ENCODE measurements at regions of chrX and their contacts with region 1.

Region 1: DNA sequence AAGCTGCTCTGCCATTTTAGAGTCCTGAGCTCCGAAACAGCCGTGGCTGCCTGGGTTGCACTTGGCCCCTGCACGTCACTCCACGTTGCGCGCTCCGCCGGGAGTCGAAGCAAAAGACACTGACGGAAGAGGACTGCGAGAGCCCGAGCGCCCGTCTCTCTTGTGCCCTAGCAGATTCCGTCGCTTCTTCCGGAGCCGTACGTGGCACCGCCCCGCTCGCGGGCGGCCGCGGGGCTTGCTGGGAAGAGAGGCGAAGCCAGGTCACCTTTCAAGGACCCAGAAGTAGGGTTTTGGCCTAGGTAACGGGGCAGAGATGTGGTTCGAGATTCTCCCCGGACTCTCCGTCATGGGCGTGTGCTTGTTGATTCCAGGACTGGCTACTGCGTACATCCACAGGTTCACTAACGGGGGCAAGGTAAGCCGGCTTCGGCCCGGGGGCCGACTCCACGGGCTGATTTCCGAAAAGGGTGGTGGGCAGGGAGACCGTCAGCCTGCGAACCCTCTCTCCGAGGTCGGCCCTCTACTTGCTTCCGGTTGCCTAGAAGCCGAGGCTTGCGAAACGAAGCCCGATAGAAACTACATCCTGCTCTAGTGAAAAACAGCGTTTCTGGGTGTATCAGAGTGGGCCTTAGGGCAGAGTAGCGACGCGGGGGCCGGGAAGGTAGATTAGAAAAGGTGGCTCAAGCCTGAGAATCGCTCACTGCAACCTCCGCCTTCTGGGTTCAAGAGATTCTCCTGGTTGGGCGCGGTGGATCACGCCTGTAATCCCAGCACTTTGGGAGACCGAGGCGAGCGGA is at the starts of genes NDUFA1 and RNF113A:
- DNase-seq: peak; percentile 65 to 90 (median 88)
- ATAC-seq: peak; percentile 95
- H3K4me3 ChIP-seq: peak within 1 kb of the TSS; percentile 90
- H3K4me3 Mint-ChIP-seq: peak within 1 kb of the TSS; percentile 86 to 100 (median 97)
- H3K27ac ChIP-seq: peak within 1 kb of the TSS; percentile 88
- H3K27ac Mint-ChIP-seq: peak within 1 kb of the TSS; percentile 94 to 100 (median 99)
- H3K4me1 ChIP-seq: peaks cover 7 to 8% of the 10 kb centered on the region in 2 donors
- H3K4me1 Mint-ChIP-seq: peaks cover 6 to 35% (median 15%) of the 10 kb centered on the region in 7 donors
- H3K27me3 ChIP-seq: no peaks in the 10 kb centered on the region
- H3K27me3 Mint-ChIP-seq: no peaks in the 10 kb centered on the region
- total RNA-seq, gene NDUFA1: 41.6 to 94.7 (median 46.8) TPM
- total RNA-seq, gene RNF113A: 25.5 to 40.6 (median 34.7) TPM

Region 2: GRCh38 chrX:118345401-118346257 is 1526.2 kb before region 1 on chrX and contains the start of gene WDR44:
- CTCF ChIA-PET with region 1: no interaction called
- POLR2A ChIA-PET with region 1: no interaction called
- intact Hi-C with region 1: loop called in 1 of 2 experiments (anchors 5 kb)
- DNase-seq: peak; percentile 79 to 95 (median 92)
- ATAC-seq: peak; percentile 95
- H3K4me3 ChIP-seq: peak within 1 kb of the TSS; percentile 87
- H3K4me3 Mint-ChIP-seq: peak within 1 kb of the TSS; percentile 87 to 99 (median 98)
- H3K27ac ChIP-seq: peak within 1 kb of the TSS; percentile 93
- H3K27ac Mint-ChIP-seq: peak within 1 kb of the TSS; percentile 92 to 99 (median 96)
- H3K4me1 ChIP-seq: peaks cover 19 to 24% of the 10 kb centered on the region in 2 donors
- H3K4me1 Mint-ChIP-seq: peaks cover 5 to 40% (median 36%) of the 10 kb centered on the region in 7 donors
- H3K27me3 ChIP-seq: no peaks in the 10 kb centered on the region
- H3K27me3 Mint-ChIP-seq: no peaks in the 10 kb centered on the region
- total RNA-seq, gene WDR44: 12.0 to 19.0 (median 17.0) TPM

Region 3: GRCh38 chrX:119574394-119575266 is 297.2 kb before region 1 on chrX and contains the start of gene UBE2A:
- CTCF ChIA-PET with region 1: no interaction called
- POLR2A ChIA-PET with region 1: interaction called, 3 read pairs
- intact Hi-C with region 1: loop called (anchors 5 kb)
- DNase-seq: peak; percentile 72 to 89 (median 85)
- ATAC-seq: peak; percentile 99
- H3K4me3 ChIP-seq: peak within 1 kb of the TSS; percentile 72
- H3K4me3 Mint-ChIP-seq: peak within 1 kb of the TSS; percentile 85 to 96 (median 92)
- H3K27ac ChIP-seq: peak within 1 kb of the TSS; percentile 88
- H3K27ac Mint-ChIP-seq: peak within 1 kb of the TSS; percentile 85 to 97 (median 90)
- H3K4me1 ChIP-seq: peaks cover 0 to 11% of the 10 kb centered on the region in 2 donors
- H3K4me1 Mint-ChIP-seq: peaks cover 7 to 35% (median 18%) of the 10 kb centered on the region in 7 donors
- H3K27me3 ChIP-seq: no peaks in the 10 kb centered on the region
- H3K27me3 Mint-ChIP-seq: no peaks in the 10 kb centered on the region
- total RNA-seq, gene UBE2A: 34.0 to 74.7 (median 60.2) TPM

Region 4: DNA sequence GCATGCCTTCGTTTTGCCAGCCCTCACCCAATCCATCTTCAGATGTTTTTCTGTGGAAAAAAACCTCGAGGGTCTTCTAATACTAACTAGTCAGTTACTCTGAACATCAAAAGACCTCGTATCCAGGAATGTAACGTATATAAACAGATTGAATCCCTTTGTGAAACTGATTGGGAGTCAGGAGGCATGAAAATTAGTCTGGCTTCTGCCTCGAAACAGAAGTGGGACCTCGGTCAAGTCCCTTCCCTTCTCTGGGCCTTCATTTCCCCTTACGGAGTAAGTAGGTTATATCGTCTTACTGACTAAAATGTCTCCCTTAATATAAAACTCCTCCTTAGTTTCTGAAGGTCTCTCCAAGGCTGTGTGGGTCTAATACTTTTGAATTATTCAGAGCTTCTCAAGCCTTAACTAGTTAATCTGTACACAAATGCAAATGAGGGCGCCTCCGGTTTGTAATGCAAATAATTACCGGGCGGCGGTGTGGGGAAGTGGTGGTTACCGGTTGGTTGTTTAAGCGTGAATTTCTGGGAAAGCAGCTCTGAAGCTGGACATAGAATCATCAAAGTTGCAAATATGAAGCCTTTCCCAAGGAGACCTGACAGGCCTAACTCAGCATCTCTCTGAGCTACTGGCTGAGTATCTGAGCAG is 254.2 kb before region 1 on chrX:
- CTCF ChIA-PET with region 1: no interaction called
- POLR2A ChIA-PET with region 1: no interaction called
- intact Hi-C with region 1: no loop called
- DNase-seq: no peak
- ATAC-seq: peak; percentile 27
- H3K4me3 ChIP-seq: no peak overlapping the region
- H3K4me3 Mint-ChIP-seq: no peak overlapping the region
- H3K27ac ChIP-seq: no peak overlapping the region
- H3K27ac Mint-ChIP-seq: peak overlapping the region in 4 of 9 donors; percentile 21 to 67 (median 50)
- H3K4me1 ChIP-seq: no peaks in the 10 kb centered on the region
- H3K4me1 Mint-ChIP-seq: peaks cover 0 to 14% (median 5%) of the 10 kb centered on the region in 7 donors
- H3K27me3 ChIP-seq: no peaks in the 10 kb centered on the region
- H3K27me3 Mint-ChIP-seq: no peaks in the 10 kb centered on the region

Region 5: DNA sequence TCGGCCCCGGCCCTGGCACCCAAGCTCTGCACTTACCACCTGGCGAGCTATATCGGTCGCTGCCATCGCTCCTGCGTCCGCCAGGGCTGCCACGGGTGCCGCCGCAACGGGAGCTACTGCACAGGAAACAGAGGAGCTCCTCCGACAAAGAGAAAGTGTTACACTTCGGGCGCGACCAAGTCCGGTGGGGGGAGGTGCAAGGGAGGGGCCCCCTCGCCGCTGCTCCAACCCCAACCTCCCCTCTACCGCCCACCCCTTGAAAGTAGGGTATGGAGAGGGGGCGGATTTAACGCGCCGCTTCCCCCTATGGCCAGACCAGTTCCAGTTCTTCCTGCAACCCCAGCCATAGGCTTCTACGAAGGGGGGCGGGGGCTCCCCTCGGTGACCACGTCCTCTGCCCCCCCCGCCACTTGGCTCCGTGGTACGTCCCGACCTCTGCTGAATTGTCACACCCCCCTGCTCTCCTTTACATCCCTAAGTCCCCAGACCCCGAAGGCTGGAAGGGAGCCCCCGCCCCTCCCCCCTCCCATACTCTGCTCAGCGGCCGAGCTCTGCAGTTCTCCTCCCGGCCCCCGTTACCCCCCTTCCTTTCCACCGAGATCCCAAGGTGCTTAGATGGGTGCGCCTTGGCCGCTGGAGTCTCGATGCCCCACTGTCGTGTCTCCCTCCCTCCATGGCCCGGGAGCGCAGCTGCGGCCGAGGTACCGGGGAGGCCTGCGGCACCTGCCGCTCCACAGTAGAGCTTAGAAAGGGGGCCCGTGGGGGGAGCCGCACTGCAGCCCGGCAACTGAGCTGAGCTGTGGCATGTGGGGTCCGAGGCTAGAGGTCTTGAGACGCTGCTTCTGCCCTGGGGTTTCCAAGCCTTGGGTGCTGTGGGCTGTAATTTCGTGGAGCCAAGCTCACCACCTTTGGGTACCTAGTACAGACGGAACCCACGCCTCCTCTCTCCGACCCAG is 178.5 kb before region 1 on chrX and contains the start of gene SEPTIN6:
- CTCF ChIA-PET with region 1: no interaction called
- POLR2A ChIA-PET with region 1: interaction called, 3 read pairs
- intact Hi-C with region 1: loop called (anchors 2 to 5 kb)
- DNase-seq: peak; percentile 69 to 93 (median 88)
- ATAC-seq: peak; percentile 83
- H3K4me3 ChIP-seq: peak within 1 kb of the TSS; percentile 77
- H3K4me3 Mint-ChIP-seq: peak within 1 kb of the TSS; percentile 96 to 100 (median 99)
- H3K27ac ChIP-seq: peak within 1 kb of the TSS; percentile 89
- H3K27ac Mint-ChIP-seq: peak within 1 kb of the TSS; percentile 95 to 99 (median 98)
- H3K4me1 ChIP-seq: peaks cover 0 to 7% of the 10 kb centered on the region in 2 donors
- H3K4me1 Mint-ChIP-seq: peaks cover 7 to 41% (median 13%) of the 10 kb centered on the region in 7 donors
- H3K27me3 ChIP-seq: no peaks in the 10 kb centered on the region
- H3K27me3 Mint-ChIP-seq: no peaks in the 10 kb centered on the region
- total RNA-seq, gene SEPTIN6: 151 to 315 (median 221) TPM

Region 6: GRCh38 chrX:119706616-119707015 is 165.2 kb before region 1 on chrX:
- CTCF ChIA-PET with region 1: no interaction called
- POLR2A ChIA-PET with region 1: no interaction called
- intact Hi-C with region 1: no loop called
- DNase-seq: no peak
- ATAC-seq: no peak
- H3K4me3 ChIP-seq: no peak overlapping the region
- H3K4me3 Mint-ChIP-seq: no peak overlapping the region
- H3K27ac ChIP-seq: no peak overlapping the region
- H3K27ac Mint-ChIP-seq: no peak overlapping the region
- H3K4me1 ChIP-seq: no peaks in the 10 kb centered on the region
- H3K4me1 Mint-ChIP-seq: peaks cover 0 to 9% (median 6%) of the 10 kb centered on the region in 7 donors
- H3K27me3 ChIP-seq: no peaks in the 10 kb centered on the region
- H3K27me3 Mint-ChIP-seq: peaks cover 0 to 6% (median 0%) of the 10 kb centered on the region in 5 donors

Region 7: DNA sequence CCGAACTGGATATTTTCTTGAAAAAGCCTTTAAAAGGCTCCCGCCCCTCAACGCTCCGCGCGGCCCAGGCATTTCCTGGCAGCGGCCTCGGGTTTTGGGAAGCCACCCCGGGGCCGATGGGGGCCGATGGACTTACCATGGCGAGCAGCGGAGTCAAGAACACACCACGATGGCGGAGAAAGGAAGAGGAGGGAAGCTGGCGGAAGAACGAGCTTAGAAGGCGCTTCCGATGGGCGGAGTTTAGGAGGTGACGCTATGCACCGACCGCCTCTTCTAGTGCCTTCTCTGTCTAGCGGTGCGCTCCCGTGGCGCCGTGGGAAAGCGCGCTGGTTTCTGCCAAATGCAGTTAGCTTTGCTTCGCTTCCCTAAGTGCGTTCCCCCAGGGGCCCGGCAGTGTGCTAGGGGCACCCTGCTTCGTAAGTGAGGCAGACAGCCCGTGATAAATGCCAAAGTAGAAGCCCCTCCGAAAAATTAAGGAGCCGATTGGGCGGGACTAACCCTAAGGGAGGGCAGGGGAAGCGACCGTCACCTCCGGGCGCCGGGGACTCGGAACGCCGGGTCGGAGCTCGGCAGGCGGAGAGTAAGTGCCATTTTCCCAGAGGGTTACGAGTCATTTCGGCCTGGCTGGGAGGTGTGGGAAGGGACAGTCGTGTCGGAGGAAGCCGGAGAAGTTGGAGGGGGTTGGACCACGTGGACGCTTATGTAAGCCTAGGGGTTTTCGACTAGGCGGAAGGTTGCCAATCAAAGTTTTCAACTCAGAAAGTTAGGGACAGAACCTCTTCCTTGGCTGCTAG is 80.2 kb before region 1 on chrX and contains the start of gene RPL39:
- CTCF ChIA-PET with region 1: no interaction called
- POLR2A ChIA-PET with region 1: interaction called, 46 read pairs
- intact Hi-C with region 1: loop called (anchors 1 kb)
- DNase-seq: peak; percentile 61 to 88 (median 82)
- ATAC-seq: peak; percentile 96
- H3K4me3 ChIP-seq: peak within 1 kb of the TSS; percentile 85
- H3K4me3 Mint-ChIP-seq: peak within 1 kb of the TSS; percentile 87 to 96 (median 92)
- H3K27ac ChIP-seq: peak within 1 kb of the TSS; percentile 91
- H3K27ac Mint-ChIP-seq: peak within 1 kb of the TSS; percentile 89 to 98 (median 97)
- H3K4me1 ChIP-seq: peaks cover 16 to 24% of the 10 kb centered on the region in 2 donors
- H3K4me1 Mint-ChIP-seq: peaks cover 5 to 33% (median 21%) of the 10 kb centered on the region in 7 donors
- H3K27me3 ChIP-seq: no peaks in the 10 kb centered on the region
- H3K27me3 Mint-ChIP-seq: no peaks in the 10 kb centered on the region
- total RNA-seq, gene RPL39: 2,181 to 4,347 (median 3,799) TPM

Region 8: GRCh38 chrX:119852382-119853353 is 19.1 kb before region 1 on chrX and contains the start of gene UPF3B:
- CTCF ChIA-PET with region 1: interaction called, 5 read pairs
- POLR2A ChIA-PET with region 1: interaction called, 27 read pairs
- intact Hi-C with region 1: loop called (anchors 1 kb)
- DNase-seq: peak; percentile 67 to 96 (median 92)
- ATAC-seq: peak; percentile 98
- H3K4me3 ChIP-seq: peak within 1 kb of the TSS; percentile 88
- H3K4me3 Mint-ChIP-seq: peak within 1 kb of the TSS; percentile 89 to 100 (median 98)
- H3K27ac ChIP-seq: peak within 1 kb of the TSS; percentile 95
- H3K27ac Mint-ChIP-seq: peak within 1 kb of the TSS; percentile 87 to 99 (median 97)
- H3K4me1 ChIP-seq: no peaks in the 10 kb centered on the region
- H3K4me1 Mint-ChIP-seq: peaks cover 3 to 29% (median 23%) of the 10 kb centered on the region in 7 donors
- H3K27me3 ChIP-seq: no peaks in the 10 kb centered on the region
- H3K27me3 Mint-ChIP-seq: peaks cover 0 to 3% (median 0%) of the 10 kb centered on the region in 5 donors
- total RNA-seq, gene UPF3B: 7.6 to 12.6 (median 11.3) TPM

Region 9: DNA sequence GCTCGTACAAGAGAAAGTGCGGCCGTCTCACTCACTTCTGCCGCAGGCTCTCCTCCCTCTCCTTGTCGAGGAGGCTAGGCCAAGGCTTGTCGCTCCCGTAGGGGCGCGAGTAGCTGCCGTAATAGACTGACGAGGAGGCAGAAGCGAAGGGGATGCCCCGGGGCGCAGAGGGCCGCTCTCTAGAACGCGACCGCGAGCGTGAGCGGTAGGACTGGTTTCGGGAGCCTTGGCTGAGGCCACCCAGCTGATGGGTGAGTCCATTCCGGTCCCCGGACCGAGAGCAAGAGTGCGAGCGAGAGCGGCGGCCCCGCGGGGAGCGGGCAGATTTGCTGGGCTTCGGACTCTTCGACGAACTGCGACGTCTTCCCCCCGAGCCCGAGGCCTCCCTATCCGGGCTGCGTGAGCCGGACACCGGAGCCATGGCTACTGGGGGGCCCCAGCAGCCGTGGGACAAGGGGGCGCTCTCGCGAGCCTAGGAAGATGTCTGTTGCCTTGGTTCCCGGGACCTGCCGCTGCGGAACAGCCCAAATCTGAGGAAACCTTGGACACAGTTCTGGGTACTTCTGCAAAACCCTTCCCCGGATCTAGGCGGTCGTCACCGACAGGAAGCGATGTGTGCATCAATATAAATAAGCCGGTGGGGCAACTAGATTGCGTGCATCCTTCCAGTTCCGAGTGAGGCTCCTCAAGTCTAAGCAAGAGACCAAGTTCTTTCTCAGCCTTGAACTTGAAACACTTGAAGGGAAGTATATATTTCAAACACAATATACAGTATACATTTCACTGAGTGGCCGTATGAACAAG is 71.6 kb after region 1 on chrX and contains the start of gene NKAP:
- CTCF ChIA-PET with region 1: interaction called, 3 read pairs
- POLR2A ChIA-PET with region 1: no interaction called
- intact Hi-C with region 1: loop called (anchors 1 kb)
- DNase-seq: peak; percentile 53 to 84 (median 79)
- ATAC-seq: peak; percentile 95
- H3K4me3 ChIP-seq: peak within 1 kb of the TSS; percentile 84
- H3K4me3 Mint-ChIP-seq: peak within 1 kb of the TSS; percentile 84 to 100 (median 97)
- H3K27ac ChIP-seq: peak within 1 kb of the TSS; percentile 97
- H3K27ac Mint-ChIP-seq: peak within 1 kb of the TSS; percentile 84 to 99 (median 94)
- H3K4me1 ChIP-seq: peaks cover 8 to 15% of the 10 kb centered on the region in 2 donors
- H3K4me1 Mint-ChIP-seq: peaks cover 13 to 30% (median 22%) of the 10 kb centered on the region in 7 donors
- H3K27me3 ChIP-seq: no peaks in the 10 kb centered on the region
- H3K27me3 Mint-ChIP-seq: peaks cover 0 to 2% (median 2%) of the 10 kb centered on the region in 5 donors
- total RNA-seq, gene NKAP: 9.7 to 19.3 (median 14.9) TPM

Measured in naive thymus-derived CD4-positive, alpha-beta T cell (primary cell).